ENCODE measurements at regions of chr2 and their contacts with region 1.

Region 1: GRCh38 chr2:74440378-74441169 is 1.2 kb downstream of the RTKN start:
- DNase-seq: peak; percentile 95
- ATAC-seq: peak; percentile 80
- H3K4me3 ChIP-seq: peak overlapping the region; percentile 76 to 94 (median 93)
- H3K27ac ChIP-seq: peak overlapping the region; percentile 91
- H3K4me1 ChIP-seq: peaks cover 66% of the 10 kb centered on the region
- H3K27me3 ChIP-seq: no peaks in the 10 kb centered on the region; a peak in 1 of 5 replicates
- CTCF ChIP-seq: peak; percentile 71
- EP300 ChIP-seq: peak; percentile 12 to 62; a peak in 2 of 4 replicates
- POLR2A ChIP-seq: peak; percentile 58 to 73
- RAD21 ChIP-seq: peak; percentile 66

Region 2: DNA sequence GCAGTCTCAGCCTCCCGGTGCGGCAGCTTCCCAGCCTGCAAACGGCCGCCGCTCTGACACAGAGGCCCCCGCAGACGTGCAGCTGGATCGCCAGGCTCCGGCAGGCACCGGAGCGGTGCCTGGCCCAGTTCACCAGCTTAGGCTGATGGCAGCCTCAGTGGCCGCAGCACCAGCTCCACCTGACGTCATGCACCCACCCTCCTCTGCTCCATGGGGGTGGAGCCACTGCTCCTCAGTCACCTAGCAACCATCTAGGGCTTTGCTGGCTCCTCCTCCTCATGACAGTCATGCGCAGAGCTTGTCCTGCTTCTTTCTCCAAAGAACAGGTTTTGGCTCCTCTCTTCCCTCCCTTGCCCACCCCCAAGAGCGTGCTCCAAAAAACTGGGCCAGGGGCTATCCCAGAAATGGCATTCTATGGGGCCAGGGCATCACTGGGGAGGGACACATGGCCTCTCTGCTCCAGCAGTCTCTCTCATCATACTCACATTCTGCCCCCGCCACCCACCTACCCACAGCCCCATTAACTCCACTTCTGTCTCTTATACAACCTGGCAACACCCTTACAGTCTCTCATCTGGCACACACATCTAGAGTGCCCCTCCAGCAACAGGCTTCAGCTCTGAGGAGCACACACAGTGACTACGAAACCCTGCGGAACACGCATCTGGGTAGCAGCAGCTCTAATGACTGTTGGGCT is 65.9 kb before region 1 on chr2:
- CTCF ChIA-PET with region 1: no interaction called
- POLR2A ChIA-PET with region 1: no interaction called
- in situ Hi-C with region 1: no loop called
- intact Hi-C with region 1: no loop called
- DNase-seq: no peak
- ATAC-seq: no peak
- H3K4me3 ChIP-seq: no peak overlapping the region
- H3K27ac ChIP-seq: no peak overlapping the region
- H3K4me1 ChIP-seq: peaks cover under 1% of the 10 kb centered on the region
- H3K27me3 ChIP-seq: no peaks in the 10 kb centered on the region
- CTCF ChIP-seq: no peak
- EP300 ChIP-seq: no peak
- POLR2A ChIP-seq: no peak
- RAD21 ChIP-seq: no peak

Region 3: GRCh38 chr2:74391580-74392448 is 48.8 kb before region 1 on chr2:
- CTCF ChIA-PET with region 1: no interaction called
- POLR2A ChIA-PET with region 1: interaction called, 20 read pairs
- in situ Hi-C with region 1: no loop called
- intact Hi-C with region 1: loop called (anchors 1 kb)
- DNase-seq: peak; percentile 91
- ATAC-seq: peak; percentile 91
- H3K4me3 ChIP-seq: peak overlapping the region; percentile 82 to 98 (median 84)
- H3K27ac ChIP-seq: peak overlapping the region; percentile 87
- H3K4me1 ChIP-seq: peaks cover 55% of the 10 kb centered on the region
- H3K27me3 ChIP-seq: peaks cover 0 to 4% of the 10 kb centered on the region in 2 experiments; a peak in 2 of 5 replicates
- CTCF ChIP-seq: peak; percentile 98
- EP300 ChIP-seq: no peak
- POLR2A ChIP-seq: peak; percentile 52 to 96
- RAD21 ChIP-seq: peak; percentile 74; the same call in 1 of the 2 replicates

Region 4: GRCh38 chr2:74429487-74430451 is 10.8 kb before region 1 on chr2:
- CTCF ChIA-PET with region 1: no interaction called
- POLR2A ChIA-PET with region 1: interaction called, 272 read pairs
- in situ Hi-C with region 1: no loop called
- intact Hi-C with region 1: loop called (anchors 1 kb)
- DNase-seq: peak; percentile 95
- ATAC-seq: peak; percentile 79
- H3K4me3 ChIP-seq: peak overlapping the region in 1 of 3 experiments; percentile 41; a peak in 2 of 6 replicates
- H3K27ac ChIP-seq: peak overlapping the region; percentile 80
- H3K4me1 ChIP-seq: peaks cover 79% of the 10 kb centered on the region
- H3K27me3 ChIP-seq: no peaks in the 10 kb centered on the region
- CTCF ChIP-seq: peak; percentile 41
- EP300 ChIP-seq: peak in 1 of 2 experiments; percentile 61; a peak in 2 of 4 replicates
- POLR2A ChIP-seq: peak; percentile 52 to 53; a peak in 3 of 4 replicates
- RAD21 ChIP-seq: peak; percentile 48; the same call in 1 of the 2 replicates

Region 5: DNA sequence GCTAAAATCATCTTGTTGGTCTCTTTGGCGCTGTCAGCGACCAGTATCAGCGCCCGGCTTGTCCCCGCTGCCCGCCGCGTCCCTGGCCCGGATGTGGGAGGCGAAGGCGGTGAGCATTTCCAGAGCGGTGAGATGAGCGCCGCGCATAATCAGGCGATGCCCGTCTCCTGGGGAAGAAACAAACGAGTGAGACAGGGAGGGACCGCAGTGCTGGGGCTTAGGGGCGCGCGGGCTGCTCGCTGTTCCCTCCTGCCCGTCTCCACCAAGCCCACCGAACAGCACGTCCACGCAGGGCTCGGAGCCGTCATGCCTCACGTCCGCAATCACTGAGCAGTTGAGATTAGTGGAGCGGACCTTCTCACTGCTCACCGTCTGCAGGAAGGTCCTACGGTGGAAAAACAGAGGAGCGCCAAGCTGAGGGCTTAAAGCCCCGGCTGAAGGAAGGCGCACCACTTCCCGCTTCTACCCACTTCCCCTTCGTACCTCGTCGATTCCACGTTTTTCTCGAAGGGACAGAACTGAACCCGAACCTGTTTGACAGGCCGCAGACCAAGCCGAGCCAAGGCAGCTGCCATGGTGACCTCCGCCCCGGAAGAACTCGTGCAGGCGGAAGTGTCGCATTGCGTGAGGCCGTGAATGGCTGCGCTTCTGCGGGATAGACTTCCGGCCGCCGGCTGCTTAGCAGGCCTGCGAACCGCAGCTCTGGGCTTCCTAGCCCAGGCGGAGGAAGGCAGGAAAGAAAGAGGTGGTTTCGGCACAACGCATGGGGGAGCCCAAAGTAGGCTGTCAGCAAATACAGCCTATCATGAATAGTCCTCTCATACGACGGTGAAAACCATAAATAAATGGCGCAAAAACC is 31.7 kb after region 1 on chr2 and contains the start of gene MRPL53:
- CTCF ChIA-PET with region 1: no interaction called
- POLR2A ChIA-PET with region 1: interaction called, 18 read pairs
- in situ Hi-C with region 1: no loop called
- intact Hi-C with region 1: no loop called
- DNase-seq: peak; percentile 92
- ATAC-seq: peak; percentile 87
- H3K4me3 ChIP-seq: peak within 1 kb of the TSS; percentile 67 to 91 (median 83)
- H3K27ac ChIP-seq: peak within 1 kb of the TSS; percentile 83
- H3K4me1 ChIP-seq: peaks cover 52% of the 10 kb centered on the region
- H3K27me3 ChIP-seq: no peaks in the 10 kb centered on the region; a peak in 1 of 5 replicates
- CTCF ChIP-seq: peak; percentile 42; the same call in 1 of the 2 replicates
- EP300 ChIP-seq: peak in 1 of 2 experiments; percentile 54; a peak in 2 of 4 replicates
- POLR2A ChIP-seq: peak; percentile 94 to 97
- RAD21 ChIP-seq: peak; percentile 45; the same call in 1 of the 2 replicates
- total RNA-seq, gene MRPL53: 51.9 and 53.8 TPM in 2 replicates

Region 6: DNA sequence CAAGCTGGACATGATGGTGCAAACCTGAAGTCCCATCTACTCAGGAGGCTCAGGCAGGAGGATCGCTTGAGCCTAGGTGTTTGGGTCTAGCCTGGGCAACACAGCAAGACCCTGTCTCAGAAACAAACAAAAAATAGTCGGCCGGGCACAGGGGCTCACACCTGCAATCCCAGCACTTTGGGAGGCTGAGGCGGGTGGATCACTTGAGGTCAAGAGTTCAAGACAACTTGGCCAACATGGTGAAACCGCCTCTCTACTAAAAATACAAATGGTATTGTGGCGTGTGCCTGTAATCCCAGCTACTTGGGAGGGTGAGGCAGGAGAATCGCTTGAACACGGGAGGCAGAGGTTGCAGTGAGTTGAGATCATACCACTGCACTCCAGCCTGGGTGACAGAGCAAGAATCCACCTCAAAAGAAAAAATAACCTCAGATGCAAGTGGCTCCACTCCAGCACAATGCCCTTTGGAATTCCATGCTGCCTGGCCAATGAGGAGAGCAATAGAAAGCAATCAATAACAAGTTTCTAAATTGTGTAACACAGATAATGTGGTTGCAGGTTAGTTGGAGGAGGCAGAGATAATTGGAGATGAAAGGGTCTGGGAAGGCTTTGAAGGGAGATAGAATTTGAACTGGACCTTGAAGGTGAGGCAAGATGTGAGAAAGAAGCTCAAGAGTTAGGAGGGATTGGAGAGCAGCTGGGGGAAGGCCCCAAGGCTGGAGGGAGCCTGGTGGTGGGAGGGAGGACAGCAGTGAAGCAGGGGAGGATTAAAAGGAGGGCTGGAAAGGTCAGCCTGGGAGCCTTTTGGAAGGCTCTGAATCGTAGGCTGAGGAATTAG is 48.3 kb after region 1 on chr2:
- CTCF ChIA-PET with region 1: no interaction called
- POLR2A ChIA-PET with region 1: interaction called, 19 read pairs
- in situ Hi-C with region 1: no loop called
- intact Hi-C with region 1: no loop called
- DNase-seq: peak; percentile 93
- ATAC-seq: peak; percentile 83
- H3K4me3 ChIP-seq: peak overlapping the region in 1 of 3 experiments; percentile 18; a peak in 2 of 6 replicates
- H3K27ac ChIP-seq: peak overlapping the region; percentile 84
- H3K4me1 ChIP-seq: peaks cover 77% of the 10 kb centered on the region
- H3K27me3 ChIP-seq: no peaks in the 10 kb centered on the region
- CTCF ChIP-seq: 0 out of 2 replicates have a peak, but pooled peaks have one; percentile 3
- EP300 ChIP-seq: peak; percentile 92 to 98
- POLR2A ChIP-seq: peak; percentile 28 to 65; a peak in 1 of 4 replicates
- RAD21 ChIP-seq: no peak

Region 7: GRCh38 chr2:74507145-74507925 is 66.8 kb after region 1 on chr2 and contains the start of gene PCGF1:
- CTCF ChIA-PET with region 1: no interaction called
- POLR2A ChIA-PET with region 1: interaction called, 32 read pairs
- in situ Hi-C with region 1: no loop called
- intact Hi-C with region 1: no loop called
- DNase-seq: peak; percentile 98
- ATAC-seq: peak; percentile 78
- H3K4me3 ChIP-seq: peak within 1 kb of the TSS; percentile 79 to 97 (median 95)
- H3K27ac ChIP-seq: peak within 1 kb of the TSS; percentile 95
- H3K4me1 ChIP-seq: peaks cover 72% of the 10 kb centered on the region
- H3K27me3 ChIP-seq: no peaks in the 10 kb centered on the region; a peak in 1 of 5 replicates
- CTCF ChIP-seq: peak; percentile 98
- EP300 ChIP-seq: peak in 1 of 2 experiments; percentile 47; a peak in 1 of 4 replicates
- POLR2A ChIP-seq: peak in 1 of 2 experiments; percentile 73; a peak in 2 of 4 replicates
- RAD21 ChIP-seq: peak; percentile 89
- total RNA-seq, gene PCGF1: 14.2 and 20.4 TPM in 2 replicates

Region 8: DNA sequence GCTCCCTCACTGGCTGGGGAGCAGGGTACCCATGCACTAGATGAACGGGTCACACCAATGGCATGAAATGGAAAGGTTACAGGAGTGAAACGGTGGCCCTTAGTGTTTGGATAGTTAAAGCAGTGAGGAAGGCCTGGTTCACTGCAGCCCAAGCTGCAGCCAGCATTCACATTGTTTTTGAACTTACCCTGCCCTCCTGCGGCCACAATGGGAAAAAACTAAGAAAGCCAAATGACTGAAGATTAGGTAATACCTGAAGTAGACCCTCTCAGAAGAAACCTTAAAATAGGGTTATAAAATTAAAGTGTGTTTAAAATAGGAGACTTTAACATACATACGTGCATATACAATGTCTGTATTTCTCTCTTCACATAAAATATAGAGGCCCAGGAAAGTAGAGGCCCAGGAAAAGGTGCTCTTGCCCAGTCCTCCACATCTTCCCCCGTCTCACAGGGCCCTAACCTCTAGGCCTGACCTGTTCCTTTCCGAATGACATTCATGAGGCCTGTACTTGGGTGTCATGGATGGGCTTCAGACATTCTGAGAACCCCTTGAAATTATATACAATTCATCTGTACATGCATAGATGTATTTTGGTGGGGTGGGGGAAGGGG is 147.2 kb after region 1 on chr2:
- CTCF ChIA-PET with region 1: no interaction called
- POLR2A ChIA-PET with region 1: no interaction called
- in situ Hi-C with region 1: no loop called
- intact Hi-C with region 1: no loop called
- DNase-seq: peak; percentile 77
- ATAC-seq: peak; percentile 96
- H3K4me3 ChIP-seq: no peak overlapping the region
- H3K27ac ChIP-seq: no peak overlapping the region
- H3K4me1 ChIP-seq: peaks cover 20% of the 10 kb centered on the region
- H3K27me3 ChIP-seq: peaks cover 0 to 4% of the 10 kb centered on the region in 2 experiments; a peak in 3 of 5 replicates
- CTCF ChIP-seq: peak; percentile 94
- EP300 ChIP-seq: no peak
- POLR2A ChIP-seq: no peak
- RAD21 ChIP-seq: peak; percentile 88